PC-9 (cell line): ENCODE measurements at regions of chr6 and their contacts with region 1.

Region 1: DNA sequence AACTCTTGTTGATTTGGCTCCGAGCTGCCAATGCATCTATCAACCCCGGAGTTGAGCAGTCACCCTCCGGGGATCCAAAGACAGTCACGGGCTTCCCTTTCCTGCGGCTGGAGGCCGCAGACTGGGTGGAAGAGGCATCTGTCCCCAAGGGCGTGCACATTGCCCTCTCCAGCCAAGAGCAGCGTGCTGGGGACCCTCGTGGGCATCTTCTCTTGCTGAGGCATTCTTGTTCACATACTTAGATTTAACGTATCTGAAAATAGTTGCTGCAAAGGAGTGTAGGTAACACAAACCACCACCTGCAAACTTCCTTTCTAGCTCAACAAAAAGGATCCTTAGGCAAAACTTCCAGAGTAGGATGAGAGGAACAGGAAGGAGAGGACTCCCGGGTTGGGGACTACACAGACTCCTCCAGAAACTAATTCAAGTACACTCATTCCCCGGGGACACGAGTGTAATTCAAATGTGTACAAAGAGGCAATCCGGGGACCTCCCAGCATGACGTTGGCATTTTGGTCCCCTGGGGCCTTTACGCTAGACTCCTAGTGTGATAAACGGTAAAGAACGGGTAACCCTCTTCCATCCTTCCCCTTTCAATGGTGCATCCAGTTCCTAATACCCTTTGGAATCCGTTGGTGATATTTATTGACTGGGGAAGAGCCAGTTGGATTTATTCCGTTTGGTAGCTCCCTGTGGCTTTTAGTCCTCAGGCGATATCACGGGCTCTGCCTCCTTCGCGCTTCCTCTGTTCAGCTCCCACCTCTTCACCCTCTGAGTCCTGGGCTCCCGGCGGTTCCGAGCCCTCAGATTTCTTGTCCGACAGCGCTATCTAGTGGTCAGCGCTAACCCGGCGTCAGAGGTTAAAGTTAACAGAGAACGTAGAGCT is 2.7 kb upstream of the COL12A1 start:
- DNase-seq: peak; percentile 63 to 83
- H3K4me3 ChIP-seq: no peak overlapping the region
- H3K27ac ChIP-seq: no peak overlapping the region
- H3K4me1 ChIP-seq: peaks cover 28% of the 10 kb centered on the region; the same call in 1 of the 2 replicates
- H3K27me3 ChIP-seq: 0 out of 2 replicates have a peak, but pooled peaks cover 4% of the 10 kb centered on the region
- CTCF ChIP-seq: peak; percentile 88

Region 2: GRCh38 chr6:73739096-73739495 is 1469.4 kb before region 1 on chr6:
- CTCF ChIA-PET with region 1: interaction called, 19 read pairs
- POLR2A ChIA-PET with region 1: interaction called, 5 read pairs
- intact Hi-C with region 1: loop called (anchors 1 kb)
- DNase-seq: peak in 1 of 2 experiments; percentile 40
- H3K4me3 ChIP-seq: no peak overlapping the region
- H3K27ac ChIP-seq: no peak overlapping the region
- H3K4me1 ChIP-seq: no peaks in the 10 kb centered on the region
- H3K27me3 ChIP-seq: no peaks in the 10 kb centered on the region
- CTCF ChIP-seq: peak; percentile 92

Region 3: GRCh38 chr6:74091136-74091793 is 1117.3 kb before region 1 on chr6:
- CTCF ChIA-PET with region 1: interaction called, 9 read pairs
- POLR2A ChIA-PET with region 1: no interaction called
- intact Hi-C with region 1: loop called (anchors 1 kb)
- DNase-seq: no peak
- H3K4me3 ChIP-seq: no peak overlapping the region
- H3K27ac ChIP-seq: no peak overlapping the region
- H3K4me1 ChIP-seq: no peaks in the 10 kb centered on the region
- H3K27me3 ChIP-seq: no peaks in the 10 kb centered on the region
- CTCF ChIP-seq: peak; percentile 86

Region 4: GRCh38 chr6:74409447-74409846 is 799.1 kb before region 1 on chr6:
- CTCF ChIA-PET with region 1: interaction called, 4 read pairs
- POLR2A ChIA-PET with region 1: no interaction called
- intact Hi-C with region 1: loop called (anchors 1 kb)
- DNase-seq: no peak
- H3K4me3 ChIP-seq: no peak overlapping the region
- H3K27ac ChIP-seq: no peak overlapping the region
- H3K4me1 ChIP-seq: no peaks in the 10 kb centered on the region
- H3K27me3 ChIP-seq: no peaks in the 10 kb centered on the region
- CTCF ChIP-seq: peak; percentile 62

Region 5: DNA sequence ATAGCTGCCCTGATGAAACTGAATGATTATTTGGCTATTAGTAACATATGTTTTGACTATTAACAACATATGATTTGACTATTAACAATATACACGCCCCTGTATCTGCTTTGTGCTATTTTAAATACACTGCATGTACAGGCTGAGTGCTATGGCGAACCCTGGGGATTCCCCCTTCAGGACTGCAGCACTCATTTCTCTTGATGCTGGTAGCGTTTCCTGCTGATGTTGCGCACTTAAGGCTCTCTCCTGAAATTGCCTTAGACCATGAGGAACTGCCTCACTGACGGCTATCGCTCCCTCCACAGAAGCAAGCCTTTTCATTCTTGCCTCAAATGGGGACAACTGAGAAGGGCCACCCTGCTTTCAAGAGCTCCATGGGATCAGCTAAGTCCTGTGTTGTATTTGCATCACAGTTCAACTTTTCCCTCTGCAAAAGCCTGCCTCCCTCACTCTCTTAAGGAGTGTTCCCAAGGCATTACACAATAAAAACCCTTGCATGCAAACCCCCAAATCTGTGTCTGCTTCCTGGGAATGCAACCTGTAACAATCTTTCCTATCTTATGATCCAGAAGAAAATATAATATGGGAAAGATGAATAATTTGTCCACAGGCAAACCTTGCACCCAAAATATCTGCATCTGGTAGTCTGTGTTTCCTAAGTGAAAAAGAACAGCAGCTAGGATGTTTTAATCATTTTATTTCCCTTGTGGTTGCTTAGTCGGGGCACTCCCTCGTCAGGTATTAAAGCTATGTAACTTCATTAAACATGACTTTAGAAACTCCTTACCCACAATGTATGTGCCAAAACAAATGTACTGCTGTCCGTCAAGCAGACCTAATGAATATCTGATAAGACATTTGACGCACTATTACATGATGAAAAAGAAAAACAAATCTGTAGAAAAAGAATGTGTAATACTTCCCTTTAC is 459.1 kb before region 1 on chr6:
- CTCF ChIA-PET with region 1: no interaction called
- POLR2A ChIA-PET with region 1: no interaction called
- intact Hi-C with region 1: loop called (anchors 5 kb)
- DNase-seq: peak; percentile 27 to 63
- H3K4me3 ChIP-seq: no peak overlapping the region
- H3K27ac ChIP-seq: no peak overlapping the region
- H3K4me1 ChIP-seq: peaks cover 12% of the 10 kb centered on the region; the same call in 1 of the 2 replicates
- H3K27me3 ChIP-seq: no peaks in the 10 kb centered on the region
- CTCF ChIP-seq: no peak

Region 6: DNA sequence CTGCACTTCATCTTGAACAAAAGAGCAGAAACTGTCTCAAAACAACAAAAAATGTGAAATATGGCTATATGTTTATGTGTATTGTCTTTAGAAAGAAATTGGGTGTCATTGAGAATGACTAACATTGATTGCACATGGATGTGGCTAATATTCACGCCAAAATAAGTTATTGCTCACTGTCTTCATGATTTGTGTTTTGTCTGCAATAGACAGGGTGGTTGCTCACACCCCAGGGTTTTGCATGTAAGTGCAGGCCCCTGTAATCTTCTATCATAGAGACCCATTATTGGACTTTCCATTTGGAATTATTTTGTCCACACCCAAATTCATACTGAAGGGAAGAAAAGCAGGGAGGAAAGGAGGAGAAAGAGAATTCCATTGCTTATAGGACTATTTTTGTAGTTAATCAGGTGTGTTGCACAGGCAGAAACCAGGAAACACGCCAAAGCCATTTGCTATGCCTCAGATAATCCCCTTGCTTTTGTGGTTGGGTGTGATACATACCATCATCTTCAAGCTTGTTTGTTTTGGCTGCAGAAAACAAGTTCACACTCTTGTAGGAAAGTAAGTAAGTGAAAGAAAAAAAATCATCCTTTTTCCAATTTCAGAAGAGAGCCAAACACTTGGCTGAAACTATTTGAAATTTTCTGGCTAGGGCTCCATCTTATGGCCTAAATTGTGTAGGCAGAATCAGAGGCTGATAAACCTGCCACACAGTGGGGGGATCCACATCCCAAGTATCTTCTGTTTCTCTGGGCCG is 216.8 kb before region 1 on chr6:
- CTCF ChIA-PET with region 1: no interaction called
- POLR2A ChIA-PET with region 1: no interaction called
- intact Hi-C with region 1: loop called (anchors 10 kb)
- DNase-seq: peak; percentile 16 to 41
- H3K4me3 ChIP-seq: no peak overlapping the region
- H3K27ac ChIP-seq: no peak overlapping the region
- H3K4me1 ChIP-seq: no peaks in the 10 kb centered on the region
- H3K27me3 ChIP-seq: no peaks in the 10 kb centered on the region
- CTCF ChIP-seq: no peak

Region 7: GRCh38 chr6:75234126-75234865 is 25.8 kb after region 1 on chr6:
- CTCF ChIA-PET with region 1: no interaction called
- POLR2A ChIA-PET with region 1: no interaction called
- intact Hi-C with region 1: no loop called
- DNase-seq: no peak
- H3K4me3 ChIP-seq: no peak overlapping the region
- H3K27ac ChIP-seq: no peak overlapping the region
- H3K4me1 ChIP-seq: no peaks in the 10 kb centered on the region
- H3K27me3 ChIP-seq: no peaks in the 10 kb centered on the region
- CTCF ChIP-seq: no peak

Region 8: GRCh38 chr6:75556240-75556639 is 347.7 kb after region 1 on chr6:
- CTCF ChIA-PET with region 1: no interaction called
- POLR2A ChIA-PET with region 1: no interaction called
- intact Hi-C with region 1: no loop called
- DNase-seq: no peak
- H3K4me3 ChIP-seq: no peak overlapping the region
- H3K27ac ChIP-seq: no peak overlapping the region
- H3K4me1 ChIP-seq: no peaks in the 10 kb centered on the region
- H3K27me3 ChIP-seq: no peaks in the 10 kb centered on the region
- CTCF ChIP-seq: no peak